Thyroid gland (tissue), 4 donors: ENCODE measurements at regions of chr20 and their contacts with region 1.

Region 1: GRCh38 chr20:884983-885952 is 30.9 kb downstream of the ANGPT4 start:
- DNase-seq: peak; percentile 79 to 82
- H3K4me3 ChIP-seq: no peak overlapping the region
- H3K27ac ChIP-seq: no peak overlapping the region
- H3K4me1 ChIP-seq: peaks cover 12 to 13% of the 10 kb centered on the region in 2 donors
- H3K27me3 ChIP-seq: no peaks in the 10 kb centered on the region
- CTCF ChIP-seq: peak in 5 of 6 experiments; percentile 28 to 77 (median 60)
- POLR2A ChIP-seq: no peak

Region 2: DNA sequence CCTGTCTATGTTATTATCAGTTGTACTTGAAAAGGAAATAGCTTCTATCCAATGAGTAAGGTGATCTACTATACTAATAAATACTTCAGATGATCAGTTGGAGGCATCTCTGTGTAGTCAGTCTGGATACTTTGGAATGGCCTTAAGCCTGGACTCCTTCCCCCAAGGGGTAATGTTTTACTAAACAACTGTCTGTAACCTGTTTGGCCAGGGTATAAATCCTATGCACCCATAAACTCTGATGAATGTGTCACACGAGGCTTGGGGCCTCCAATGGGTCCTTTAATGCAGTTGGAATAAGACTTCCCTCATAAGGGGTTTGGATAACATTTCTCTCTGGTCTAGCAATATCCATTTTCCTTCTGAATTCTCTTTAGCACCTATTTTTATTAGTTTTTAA is 97.4 kb before region 1 on chr20:
- intact Hi-C with region 1: no loop called
- DNase-seq: no peak
- H3K4me3 ChIP-seq: no peak overlapping the region
- H3K27ac ChIP-seq: no peak overlapping the region
- H3K4me1 ChIP-seq: no peaks in the 10 kb centered on the region
- H3K27me3 ChIP-seq: no peaks in the 10 kb centered on the region
- CTCF ChIP-seq: no peak
- POLR2A ChIP-seq: no peak

Region 3: GRCh38 chr20:956330-956951 is 71.2 kb after region 1 on chr20:
- intact Hi-C with region 1: loop called (anchors 5 kb)
- DNase-seq: peak; percentile 72 to 77
- H3K4me3 ChIP-seq: no peak overlapping the region
- H3K27ac ChIP-seq: peak overlapping the region in 1 of 3 donors; percentile 77
- H3K4me1 ChIP-seq: peaks cover 27 to 32% of the 10 kb centered on the region in 2 donors
- H3K27me3 ChIP-seq: no peaks in the 10 kb centered on the region
- CTCF ChIP-seq: peak; percentile 89 to 99 (median 98)
- POLR2A ChIP-seq: no peak